Activated CD8-positive, alpha-beta T cell treated with anti-CD3 and anti-CD28 coated beads for 36 hours (primary cell): ENCODE measurements at regions of chr9 and their contacts with region 1.

Region 1: DNA sequence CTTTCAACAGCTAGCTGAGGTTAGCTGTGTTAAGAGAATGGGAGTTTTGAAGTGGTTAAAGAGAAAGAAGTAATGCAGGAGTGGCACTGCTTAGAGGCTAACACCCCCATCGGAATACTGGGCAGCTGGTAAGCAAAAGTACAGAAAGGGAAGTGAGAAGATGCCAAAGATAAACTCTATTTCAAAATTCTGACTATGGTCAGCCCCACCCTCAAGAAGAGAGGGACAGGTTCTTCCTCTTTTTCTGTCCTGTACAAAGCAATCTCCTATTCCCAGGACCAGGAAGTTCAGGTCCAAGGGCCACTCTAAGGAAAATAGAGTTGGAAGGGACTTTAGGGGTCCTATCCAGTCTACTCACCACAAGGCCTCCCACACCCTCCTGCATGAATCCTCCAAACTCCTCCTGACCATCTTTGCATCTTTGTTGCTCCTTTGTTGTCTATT is 45.9 kb upstream of the JAK2 start:
- DNase-seq: peak; percentile 47
- ATAC-seq: peak; percentile 63
- H3K4me3 Mint-ChIP-seq: peak overlapping the region; percentile 14
- H3K27ac Mint-ChIP-seq: peak overlapping the region; percentile 89
- H3K4me1 Mint-ChIP-seq: peaks cover 76% of the 10 kb centered on the region
- H3K27me3 Mint-ChIP-seq: no peaks in the 10 kb centered on the region
- CTCF ChIP-seq: no peak

Region 2: GRCh38 chr9:4970970-4971641 is 32.0 kb after region 1 on chr9:
- CTCF ChIA-PET with region 1: interaction called, 3 read pairs
- POLR2A ChIA-PET with region 1: interaction called, 21 read pairs
- intact Hi-C with region 1: loop called (anchors 2 kb)
- DNase-seq: peak; percentile 89
- ATAC-seq: peak; percentile 86
- H3K4me3 Mint-ChIP-seq: no peak overlapping the region
- H3K27ac Mint-ChIP-seq: no peak overlapping the region
- H3K4me1 Mint-ChIP-seq: peaks cover 30% of the 10 kb centered on the region
- H3K27me3 Mint-ChIP-seq: no peaks in the 10 kb centered on the region
- CTCF ChIP-seq: no peak

Region 3: DNA sequence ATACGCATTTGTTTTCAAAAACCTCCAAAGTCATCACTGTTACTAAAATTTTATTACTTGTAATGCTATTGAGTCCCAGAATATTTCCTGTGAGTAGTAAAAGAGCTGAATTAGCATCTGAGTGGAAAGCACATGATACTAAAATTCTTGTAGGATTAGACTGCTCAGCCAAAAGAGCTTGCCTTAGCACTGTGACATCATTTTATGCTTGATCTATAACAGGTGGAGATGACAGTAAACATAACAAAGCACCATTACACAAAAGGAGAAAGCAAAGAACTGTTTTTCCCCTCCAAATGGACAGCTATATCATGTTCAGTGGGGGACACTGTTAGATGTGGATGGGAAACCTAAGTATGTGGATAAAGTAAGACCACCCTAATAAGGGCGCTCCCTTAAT is 40.1 kb after region 1 on chr9:
- CTCF ChIA-PET with region 1: interaction called, 8 read pairs
- POLR2A ChIA-PET with region 1: interaction called, 15 read pairs
- intact Hi-C with region 1: no loop called
- DNase-seq: no peak
- ATAC-seq: no peak
- H3K4me3 Mint-ChIP-seq: no peak overlapping the region
- H3K27ac Mint-ChIP-seq: peak overlapping the region; percentile 81
- H3K4me1 Mint-ChIP-seq: peaks cover 54% of the 10 kb centered on the region
- H3K27me3 Mint-ChIP-seq: peaks cover 2% of the 10 kb centered on the region
- CTCF ChIP-seq: no peak

Region 4: DNA sequence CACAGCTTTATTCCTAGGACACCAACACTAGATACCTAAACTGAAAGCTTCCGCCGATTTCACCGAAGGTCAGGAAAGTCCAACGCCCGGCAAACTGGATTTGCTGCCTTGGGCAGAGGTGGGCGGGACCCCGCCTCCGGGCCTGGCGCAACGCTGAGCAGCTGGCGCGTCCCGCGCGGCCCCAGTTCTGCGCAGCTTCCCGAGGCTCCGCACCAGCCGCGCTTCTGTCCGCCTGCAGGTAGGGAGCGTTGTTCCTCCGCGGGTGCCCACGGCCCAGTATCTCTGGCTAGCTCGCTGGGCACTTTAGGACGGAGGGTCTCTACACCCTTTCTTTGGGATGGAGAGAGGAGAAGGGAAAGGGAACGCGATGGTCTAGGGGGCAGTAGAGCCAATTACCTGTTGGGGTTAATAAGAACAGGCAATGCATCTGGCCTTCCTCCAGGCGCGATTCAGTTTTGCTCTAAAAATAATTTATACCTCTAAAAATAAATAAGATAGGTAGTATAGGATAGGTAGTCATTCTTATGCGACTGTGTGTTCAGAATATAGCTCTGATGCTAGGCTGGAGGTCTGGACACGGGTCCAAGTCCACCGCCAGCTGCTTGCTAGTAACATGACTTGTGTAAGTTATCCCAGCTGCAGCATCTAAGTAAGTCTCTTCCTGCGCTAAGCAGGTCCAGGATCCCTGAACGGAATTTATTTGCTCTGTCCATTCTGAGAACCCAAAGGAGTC is 511.4 kb after region 1 on chr9 and contains the start of gene CD274:
- CTCF ChIA-PET with region 1: no interaction called
- POLR2A ChIA-PET with region 1: no interaction called
- intact Hi-C with region 1: loop called (anchors 10 kb)
- DNase-seq: peak; percentile 91
- ATAC-seq: peak; percentile 79
- H3K4me3 Mint-ChIP-seq: peak within 1 kb of the TSS; percentile 93
- H3K27ac Mint-ChIP-seq: peak within 1 kb of the TSS; percentile 92
- H3K4me1 Mint-ChIP-seq: peaks cover 75% of the 10 kb centered on the region
- H3K27me3 Mint-ChIP-seq: no peaks in the 10 kb centered on the region
- CTCF ChIP-seq: peak; percentile 64
- total RNA-seq, gene CD274: 12.2 to 13.7 TPM